IMR-90 (cell line): ENCODE measurements at regions of chr9 and their contacts with region 1.

Region 1: DNA sequence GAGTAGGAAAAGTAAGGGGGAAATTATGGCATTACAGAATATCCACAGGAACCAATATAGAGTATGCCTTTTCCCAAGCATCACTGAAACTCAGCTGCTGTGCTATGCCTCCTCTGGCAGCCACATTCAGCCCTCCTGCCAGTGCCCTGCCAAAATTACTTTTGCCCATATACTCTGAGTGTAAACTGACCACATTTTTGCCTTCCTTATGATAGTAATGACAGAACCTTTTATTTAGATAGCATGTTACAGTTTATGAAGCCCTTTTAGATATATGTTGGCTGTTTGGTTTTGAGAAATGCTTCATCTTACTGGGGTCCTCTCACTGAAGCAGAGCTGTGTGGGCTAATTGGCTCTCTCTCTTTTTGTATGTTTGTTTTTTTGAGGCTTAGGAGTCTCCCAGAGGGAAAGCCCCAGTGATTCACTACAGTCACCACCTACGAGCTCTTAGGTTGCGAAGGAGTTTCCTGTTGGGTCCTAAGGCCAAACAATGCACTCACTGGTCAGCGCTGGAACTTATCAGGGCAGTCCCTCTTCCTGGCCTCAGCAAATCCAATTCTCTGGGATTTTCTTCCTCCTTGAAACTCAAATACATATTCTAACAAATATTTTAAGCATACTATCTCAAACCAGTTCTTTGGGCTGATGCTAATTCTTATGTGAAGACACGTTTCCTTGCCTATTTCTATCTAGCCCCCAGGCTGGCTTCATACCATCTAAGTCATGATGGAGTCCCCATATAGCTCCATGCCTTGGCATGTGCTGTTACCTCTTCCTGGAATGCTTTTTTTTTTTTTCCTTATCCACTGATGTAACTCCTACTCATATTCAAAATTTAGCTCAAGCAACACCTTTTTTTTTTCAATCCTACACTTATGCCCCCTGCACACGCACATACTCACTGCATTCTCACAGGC is 3.7 kb downstream of the PHF24 start:
- DNase-seq: peak; percentile 80
- ATAC-seq: peak; percentile 74
- H3K4me3 ChIP-seq: no peak overlapping the region
- H3K27ac ChIP-seq: no peak overlapping the region
- H3K4me1 ChIP-seq: no peaks in the 10 kb centered on the region
- H3K27me3 ChIP-seq: peaks cover 58% of the 10 kb centered on the region
- CTCF ChIP-seq: no peak
- POLR2A ChIP-seq: no peak
- RAD21 ChIP-seq: no peak

Region 2: GRCh38 chr9:34759432-34760134 is 202.2 kb before region 1 on chr9:
- CTCF ChIA-PET with region 1: no interaction called
- POLR2A ChIA-PET with region 1: no interaction called
- dilution Hi-C with region 1: no loop called
- in situ Hi-C with region 1: no loop called
- intact Hi-C with region 1: loop called (anchors 10 kb)
- DNase-seq: no peak
- ATAC-seq: no peak
- H3K4me3 ChIP-seq: no peak overlapping the region
- H3K27ac ChIP-seq: no peak overlapping the region
- H3K4me1 ChIP-seq: no peaks in the 10 kb centered on the region
- H3K27me3 ChIP-seq: peaks cover 18% of the 10 kb centered on the region
- CTCF ChIP-seq: no peak
- POLR2A ChIP-seq: no peak
- RAD21 ChIP-seq: no peak

Region 3: DNA sequence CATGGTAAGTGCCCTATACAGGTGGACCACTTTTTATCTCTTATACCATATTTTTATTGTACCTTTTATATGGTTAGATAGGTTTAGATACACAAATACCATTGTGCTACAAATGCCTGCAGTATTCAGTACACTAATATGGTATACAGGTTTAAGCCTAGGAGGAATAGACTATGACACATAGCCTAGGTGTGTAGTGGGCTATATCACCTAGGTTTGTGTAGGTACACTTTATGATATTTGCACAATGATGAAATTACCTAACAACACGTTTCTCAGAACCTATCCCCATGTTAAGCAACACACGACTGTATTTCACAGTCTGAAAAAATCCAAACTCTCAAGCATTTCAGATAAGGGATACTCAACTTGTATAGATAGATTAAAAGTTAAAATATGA is 13.4 kb before region 1 on chr9:
- CTCF ChIA-PET with region 1: no interaction called
- POLR2A ChIA-PET with region 1: no interaction called
- dilution Hi-C with region 1: no loop called
- in situ Hi-C with region 1: no loop called
- intact Hi-C with region 1: loop called (anchors 2 kb)
- DNase-seq: no peak
- ATAC-seq: no peak
- H3K4me3 ChIP-seq: no peak overlapping the region
- H3K27ac ChIP-seq: no peak overlapping the region
- H3K4me1 ChIP-seq: no peaks in the 10 kb centered on the region
- H3K27me3 ChIP-seq: peaks cover 16% of the 10 kb centered on the region
- CTCF ChIP-seq: no peak
- POLR2A ChIP-seq: no peak
- RAD21 ChIP-seq: no peak

Region 4: GRCh38 chr9:34974664-34975063 is 12.8 kb after region 1 on chr9:
- CTCF ChIA-PET with region 1: no interaction called
- POLR2A ChIA-PET with region 1: interaction called, 13 read pairs
- dilution Hi-C with region 1: no loop called
- in situ Hi-C with region 1: no loop called
- intact Hi-C with region 1: no loop called
- DNase-seq: no peak
- ATAC-seq: no peak
- H3K4me3 ChIP-seq: no peak overlapping the region
- H3K27ac ChIP-seq: no peak overlapping the region
- H3K4me1 ChIP-seq: no peaks in the 10 kb centered on the region
- H3K27me3 ChIP-seq: peaks cover 57% of the 10 kb centered on the region
- CTCF ChIP-seq: no peak
- POLR2A ChIP-seq: no peak
- RAD21 ChIP-seq: no peak